Activated CD4-positive, alpha-beta memory T cell treated with anti-CD3 and anti-CD28 coated beads for 36 hours (primary cell): ENCODE measurements at regions of chr15 and their contacts with region 1.

Region 1: GRCh38 chr15:58182460-58183163 is 44.4 kb downstream of the AQP9 start:
- DNase-seq: peak; percentile 39
- H3K4me3 Mint-ChIP-seq: no peak overlapping the region
- H3K27ac Mint-ChIP-seq: no peak overlapping the region
- H3K4me1 Mint-ChIP-seq: peaks cover 8% of the 10 kb centered on the region
- H3K27me3 Mint-ChIP-seq: peaks cover 24% of the 10 kb centered on the region

Region 2: DNA sequence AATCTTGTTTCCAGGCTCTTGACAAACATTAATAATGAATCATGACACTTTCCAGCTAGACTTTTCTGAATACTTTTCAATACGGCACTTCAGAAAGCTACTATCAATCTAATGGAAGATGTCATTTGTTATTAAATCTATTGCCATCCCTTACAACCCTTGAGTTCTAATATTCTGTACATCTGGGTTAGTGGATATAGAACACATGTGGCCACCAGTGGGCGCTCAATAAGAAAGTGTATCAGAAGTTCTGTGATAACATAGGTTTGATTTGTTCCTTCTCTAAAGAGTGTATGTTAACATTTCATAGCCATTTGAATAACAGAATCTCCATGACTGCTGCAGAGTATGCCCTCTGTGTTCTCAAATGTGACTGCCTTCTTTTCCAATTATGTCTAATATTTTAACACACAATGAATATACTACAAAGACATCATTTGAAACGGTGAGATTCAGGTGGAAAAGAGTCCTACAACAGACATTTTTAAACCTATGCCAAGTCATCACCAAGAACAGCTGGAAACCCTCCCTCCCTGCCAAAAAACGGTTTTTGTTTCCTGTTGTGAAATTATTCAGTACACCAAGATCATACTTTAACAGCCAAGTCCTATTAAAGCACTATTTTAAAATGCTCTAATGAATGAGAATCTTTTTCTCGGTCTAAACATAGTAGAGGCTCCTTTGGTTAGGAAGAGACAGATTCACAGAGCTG is 139.3 kb before region 1 on chr15:
- CTCF ChIA-PET with region 1: interaction called, 4 read pairs
- POLR2A ChIA-PET with region 1: no interaction called
- intact Hi-C with region 1: loop called (anchors 1 kb)
- DNase-seq: peak; percentile 49
- H3K4me3 Mint-ChIP-seq: no peak overlapping the region
- H3K27ac Mint-ChIP-seq: no peak overlapping the region
- H3K4me1 Mint-ChIP-seq: no peaks in the 10 kb centered on the region
- H3K27me3 Mint-ChIP-seq: peaks cover 21% of the 10 kb centered on the region

Region 3: DNA sequence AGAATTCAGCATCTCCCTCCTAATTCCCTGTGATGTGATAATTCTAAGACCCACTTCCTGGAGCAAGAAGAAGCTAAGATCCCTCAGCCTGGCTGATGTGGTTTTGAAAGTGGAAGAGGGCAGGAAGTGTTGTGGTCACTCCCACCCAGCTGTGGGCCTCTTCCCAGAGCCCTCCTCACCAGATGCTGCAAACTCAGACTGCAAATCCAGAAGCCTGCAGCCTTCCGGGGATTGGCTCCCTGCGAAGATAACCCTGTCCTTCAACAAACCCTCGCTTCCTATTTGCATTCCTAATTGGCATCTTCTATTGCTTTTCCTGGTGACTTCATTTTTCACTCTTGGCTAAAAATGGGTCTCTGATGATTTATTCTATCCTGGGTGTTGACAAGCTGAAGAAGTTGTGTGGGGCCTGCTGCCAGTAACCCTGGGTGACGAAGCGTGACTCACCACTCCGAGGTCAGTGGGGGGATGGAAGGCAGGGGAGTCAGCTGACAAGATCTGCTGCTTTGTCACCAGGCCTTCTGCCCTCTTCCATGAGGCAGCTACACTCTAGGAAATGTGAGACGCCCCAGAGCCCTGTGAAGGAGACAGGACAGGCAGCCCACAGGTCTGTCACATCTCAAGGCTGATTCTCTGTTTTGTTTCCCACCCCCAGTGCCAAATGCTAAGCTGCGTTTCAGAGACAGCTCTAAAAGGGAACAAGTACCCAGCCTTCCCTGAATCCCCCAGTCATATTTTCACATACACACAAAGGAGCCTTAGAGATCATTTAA is 149.5 kb after region 1 on chr15:
- CTCF ChIA-PET with region 1: no interaction called
- POLR2A ChIA-PET with region 1: no interaction called
- intact Hi-C with region 1: no loop called
- DNase-seq: peak; percentile 96
- H3K4me3 Mint-ChIP-seq: peak overlapping the region; percentile 23
- H3K27ac Mint-ChIP-seq: peak overlapping the region; percentile 91
- H3K4me1 Mint-ChIP-seq: peaks cover 41% of the 10 kb centered on the region
- H3K27me3 Mint-ChIP-seq: no peaks in the 10 kb centered on the region